ENCODE measurements at regions of chr19 and their contacts with region 1.

Region 1: GRCh38 chr19:17511724-17512573 is 500 bp downstream of the PGLS start:
- DNase-seq: peak; percentile 77 to 96 (median 89)
- ATAC-seq: peak; percentile 83
- H3K4me3 ChIP-seq: peak overlapping the region; percentile 68 to 96
- H3K4me3 Mint-ChIP-seq: peak overlapping the region; percentile 100
- H3K27ac ChIP-seq: peak overlapping the region; percentile 81 to 86
- H3K27ac Mint-ChIP-seq: peak overlapping the region; percentile 97
- H3K4me1 ChIP-seq: peaks cover 17% of the 10 kb centered on the region
- H3K4me1 Mint-ChIP-seq: peaks cover 36% of the 10 kb centered on the region
- H3K27me3 ChIP-seq: no peaks in the 10 kb centered on the region
- H3K27me3 Mint-ChIP-seq: no peaks in the 10 kb centered on the region
- CTCF ChIP-seq: no peak

Region 2: GRCh38 chr19:17488593-17489391 is 23.2 kb before region 1 on chr19:
- CTCF ChIA-PET with region 1: no interaction called
- POLR2A ChIA-PET with region 1: no interaction called
- intact Hi-C with region 1: loop called in 1 of 2 experiments (anchors 2 kb)
- DNase-seq: peak; percentile 54 to 89 (median 80)
- ATAC-seq: peak; percentile 84
- H3K4me3 ChIP-seq: peak overlapping the region; percentile 45 to 50
- H3K4me3 Mint-ChIP-seq: peak overlapping the region; percentile 84
- H3K27ac ChIP-seq: peak overlapping the region; percentile 65 to 83
- H3K27ac Mint-ChIP-seq: peak overlapping the region; percentile 95
- H3K4me1 ChIP-seq: peaks cover 42% of the 10 kb centered on the region
- H3K4me1 Mint-ChIP-seq: peaks cover 48% of the 10 kb centered on the region
- H3K27me3 ChIP-seq: no peaks in the 10 kb centered on the region
- H3K27me3 Mint-ChIP-seq: no peaks in the 10 kb centered on the region
- CTCF ChIP-seq: no peak

Region 3: GRCh38 chr19:17522988-17523872 is 11.3 kb after region 1 on chr19:
- CTCF ChIA-PET with region 1: interaction called, 7 read pairs
- POLR2A ChIA-PET with region 1: interaction called, 41 read pairs
- intact Hi-C with region 1: no loop called
- DNase-seq: peak in 8 of 9 experiments; percentile 24 to 82 (median 57)
- ATAC-seq: peak; percentile 73
- H3K4me3 ChIP-seq: peak overlapping the region; percentile 21 to 34
- H3K4me3 Mint-ChIP-seq: peak overlapping the region; percentile 72
- H3K27ac ChIP-seq: peak overlapping the region; percentile 46 to 77
- H3K27ac Mint-ChIP-seq: peak overlapping the region; percentile 93
- H3K4me1 ChIP-seq: peaks cover 39% of the 10 kb centered on the region
- H3K4me1 Mint-ChIP-seq: peaks cover 30% of the 10 kb centered on the region
- H3K27me3 ChIP-seq: no peaks in the 10 kb centered on the region
- H3K27me3 Mint-ChIP-seq: no peaks in the 10 kb centered on the region
- CTCF ChIP-seq: no peak

Region 4: DNA sequence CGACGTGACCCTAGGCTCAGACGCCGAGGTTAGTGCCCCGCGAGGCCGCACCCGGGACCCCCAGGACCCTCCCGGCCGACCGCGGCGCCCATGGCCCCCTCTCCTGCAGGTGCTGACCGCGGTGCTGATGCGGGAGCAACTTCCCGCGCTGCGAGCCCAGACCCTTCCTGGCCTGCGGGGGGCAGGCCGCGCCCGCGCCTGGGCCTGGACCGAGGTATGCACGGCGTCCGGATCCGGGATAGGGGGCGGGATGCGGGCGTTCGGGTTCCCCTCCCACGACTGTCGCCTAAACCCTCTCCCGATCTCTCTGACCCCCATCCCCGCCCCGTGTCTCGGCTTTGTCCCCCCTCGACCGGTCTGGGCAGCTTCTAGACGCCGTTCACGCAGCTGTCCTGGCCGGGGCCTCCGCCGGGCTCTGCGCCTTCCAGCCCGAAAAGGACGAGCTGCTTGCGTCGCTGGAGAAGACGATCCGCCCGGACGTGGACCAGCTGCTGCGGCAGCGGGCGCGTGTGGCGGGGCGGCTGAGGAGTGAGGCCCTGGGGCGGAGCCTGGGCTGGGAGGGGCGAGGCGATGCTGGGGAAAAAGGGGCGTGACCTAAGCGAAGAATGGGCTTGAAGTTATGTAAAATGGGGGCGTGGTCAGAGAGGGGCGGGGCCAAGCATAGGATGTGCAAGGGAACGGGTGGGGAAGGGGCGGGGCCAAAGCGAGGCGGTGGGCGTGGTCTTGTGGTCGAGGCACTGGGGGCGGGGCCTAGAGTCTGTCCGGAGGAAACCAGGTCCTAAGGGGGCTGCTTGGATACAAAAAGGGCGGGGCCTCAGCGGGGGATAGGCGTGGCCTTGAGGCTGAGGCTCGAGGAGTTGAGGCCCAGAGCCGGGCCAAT is 27.5 kb after region 1 on chr19:
- CTCF ChIA-PET with region 1: interaction called, 3 read pairs
- POLR2A ChIA-PET with region 1: interaction called, 8 read pairs
- intact Hi-C with region 1: loop called (anchors 1 kb)
- DNase-seq: peak; percentile 83 to 99 (median 96)
- ATAC-seq: peak; percentile 99
- H3K4me3 ChIP-seq: peak overlapping the region; percentile 56 to 63
- H3K4me3 Mint-ChIP-seq: peak overlapping the region; percentile 90
- H3K27ac ChIP-seq: peak overlapping the region; percentile 28 to 37
- H3K27ac Mint-ChIP-seq: peak overlapping the region; percentile 78
- H3K4me1 ChIP-seq: peaks cover 8% of the 10 kb centered on the region
- H3K4me1 Mint-ChIP-seq: peaks cover 11% of the 10 kb centered on the region
- H3K27me3 ChIP-seq: no peaks in the 10 kb centered on the region
- H3K27me3 Mint-ChIP-seq: no peaks in the 10 kb centered on the region
- CTCF ChIP-seq: no peak

Region 5: GRCh38 chr19:17605761-17606745 is 94.1 kb after region 1 on chr19:
- CTCF ChIA-PET with region 1: no interaction called
- POLR2A ChIA-PET with region 1: no interaction called
- intact Hi-C with region 1: loop called in 1 of 2 experiments (anchors 5 kb)
- DNase-seq: peak; percentile 61 to 94 (median 80)
- ATAC-seq: peak; percentile 98
- H3K4me3 ChIP-seq: peak overlapping the region; percentile 27 to 69
- H3K4me3 Mint-ChIP-seq: peak overlapping the region; percentile 80
- H3K27ac ChIP-seq: peak overlapping the region in 1 of 2 experiments; percentile 51
- H3K27ac Mint-ChIP-seq: no peak overlapping the region
- H3K4me1 ChIP-seq: peaks cover 10% of the 10 kb centered on the region
- H3K4me1 Mint-ChIP-seq: peaks cover 8% of the 10 kb centered on the region
- H3K27me3 ChIP-seq: peaks cover 6 to 7% of the 10 kb centered on the region in 2 experiments
- H3K27me3 Mint-ChIP-seq: peaks cover 32% of the 10 kb centered on the region
- CTCF ChIP-seq: peak; percentile 75

Measured in CD8-positive, alpha-beta T cell (primary cell).